ENCODE measurements at regions of chr16 and their contacts with region 1.

Region 1: DNA sequence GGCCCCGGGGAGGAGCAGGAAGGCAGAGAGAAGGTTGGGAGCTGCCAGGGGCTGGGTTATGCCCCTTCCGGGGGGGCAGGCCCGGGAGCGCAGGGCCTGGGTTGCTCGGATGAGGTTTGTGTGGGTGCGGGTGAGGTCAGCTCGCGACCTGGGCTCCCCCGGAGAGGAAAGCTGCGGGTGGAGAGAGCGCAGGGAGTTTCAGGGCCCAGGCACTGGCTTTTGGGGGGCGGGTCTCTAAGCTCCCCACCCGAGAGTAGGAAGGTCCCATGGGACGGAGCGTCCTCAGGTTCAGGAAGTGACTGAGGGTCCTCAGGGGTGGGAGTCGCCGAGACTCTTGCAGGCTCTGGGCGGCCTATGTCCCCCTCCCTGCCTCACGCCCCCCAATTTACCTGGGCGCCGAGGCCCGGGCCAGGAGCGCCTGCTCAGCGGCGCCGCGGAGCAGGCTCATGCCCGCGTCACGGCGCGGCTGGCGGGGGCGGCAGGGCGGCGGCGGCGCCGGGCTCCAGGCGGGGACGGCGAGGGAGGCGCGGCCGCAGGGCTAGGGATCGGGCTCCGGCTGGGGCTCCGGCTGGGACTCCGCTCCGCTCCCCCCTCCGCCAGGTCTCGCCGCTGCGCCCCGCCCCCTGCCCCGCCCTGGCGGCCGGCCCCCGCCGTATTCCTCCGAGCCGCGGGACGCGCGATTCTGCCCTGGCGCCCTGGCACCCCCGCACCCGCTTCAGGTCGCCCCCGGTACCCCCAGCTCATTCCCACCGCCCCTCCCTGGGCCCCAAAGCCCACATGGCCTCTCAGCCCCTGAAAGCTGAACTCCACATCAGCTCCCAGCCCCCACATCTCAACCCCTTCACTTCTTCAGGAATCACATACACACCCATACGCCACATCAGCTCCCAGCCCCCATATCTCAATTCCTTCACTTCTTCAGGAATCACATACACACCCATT is at the start of gene DOK4:
- DNase-seq: peak; percentile 90
- total RNA-seq, gene DOK4: 11.5 TPM

Region 2: DNA sequence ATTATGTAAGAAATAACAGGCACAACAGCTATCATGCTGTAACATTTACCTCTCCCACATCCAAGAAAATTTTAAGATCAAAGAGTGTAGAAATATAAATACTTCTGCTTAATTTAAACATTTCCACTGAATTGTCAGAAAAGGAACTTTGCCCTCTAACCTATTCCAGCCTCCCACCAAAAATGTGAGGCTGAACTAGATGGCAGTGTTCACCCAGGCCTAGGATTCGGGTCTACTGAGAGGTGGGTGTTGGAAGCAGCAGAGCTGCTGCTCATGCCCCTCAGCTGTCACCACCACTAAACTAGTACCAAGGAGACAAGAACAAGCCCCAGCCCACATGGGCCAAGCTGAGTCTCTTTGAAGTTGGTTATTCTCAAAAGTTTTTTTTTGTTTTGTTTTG is 50.3 kb before region 1 on chr16:
- intact Hi-C with region 1: no loop called
- DNase-seq: no peak

Region 3: DNA sequence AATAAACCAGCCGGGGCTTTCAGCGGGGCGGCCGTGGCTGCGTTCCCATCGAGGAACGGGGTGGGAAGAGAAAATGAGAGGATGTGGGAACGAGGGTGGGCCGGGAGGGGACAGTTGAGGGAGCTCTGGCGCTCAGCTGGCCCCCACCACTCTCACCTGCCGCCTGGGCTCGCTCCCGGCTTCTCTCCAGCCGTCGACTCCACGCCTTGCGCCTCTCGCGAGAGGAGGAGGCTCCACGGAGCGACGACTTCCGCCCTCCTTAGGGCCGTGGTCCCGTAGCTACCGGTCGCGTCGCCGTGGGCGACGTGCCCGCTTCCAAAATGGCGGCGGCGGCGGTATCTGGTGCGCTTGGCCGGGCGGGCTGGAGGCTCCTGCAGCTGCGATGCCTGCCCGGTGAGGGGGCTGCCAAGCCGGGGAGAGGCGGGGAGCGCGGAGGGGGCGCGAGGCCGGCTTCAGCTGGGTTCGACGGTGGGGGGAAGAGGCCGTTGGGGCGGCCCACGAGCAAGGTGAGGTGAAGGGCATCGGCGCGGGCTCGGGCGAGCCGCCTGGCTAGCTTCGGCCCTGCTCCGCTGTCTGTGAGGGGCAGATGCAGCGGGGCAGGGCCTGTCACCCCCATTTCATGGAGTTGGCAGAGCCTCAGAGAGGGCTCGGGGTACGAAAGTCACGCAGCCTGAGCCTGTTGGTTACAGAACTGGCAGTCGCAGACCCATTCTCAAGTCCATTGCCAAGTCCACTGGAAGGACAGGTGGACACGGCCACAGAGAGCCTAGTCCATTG is 38.8 kb before region 1 on chr16 and contains the starts of genes CIAPIN1 and COQ9:
- intact Hi-C with region 1: loop called (anchors 5 kb)
- DNase-seq: peak; percentile 98
- total RNA-seq, gene CIAPIN1: 60.1 TPM
- total RNA-seq, gene COQ9: 156 TPM

Measured in cardiac septum (tissue), 1 donor.